Activated CD8-positive, alpha-beta T cell treated with anti-CD3 and anti-CD28 coated beads for 36 hours (primary cell): ENCODE measurements at regions of chr7 and their contacts with region 1.

Region 1: DNA sequence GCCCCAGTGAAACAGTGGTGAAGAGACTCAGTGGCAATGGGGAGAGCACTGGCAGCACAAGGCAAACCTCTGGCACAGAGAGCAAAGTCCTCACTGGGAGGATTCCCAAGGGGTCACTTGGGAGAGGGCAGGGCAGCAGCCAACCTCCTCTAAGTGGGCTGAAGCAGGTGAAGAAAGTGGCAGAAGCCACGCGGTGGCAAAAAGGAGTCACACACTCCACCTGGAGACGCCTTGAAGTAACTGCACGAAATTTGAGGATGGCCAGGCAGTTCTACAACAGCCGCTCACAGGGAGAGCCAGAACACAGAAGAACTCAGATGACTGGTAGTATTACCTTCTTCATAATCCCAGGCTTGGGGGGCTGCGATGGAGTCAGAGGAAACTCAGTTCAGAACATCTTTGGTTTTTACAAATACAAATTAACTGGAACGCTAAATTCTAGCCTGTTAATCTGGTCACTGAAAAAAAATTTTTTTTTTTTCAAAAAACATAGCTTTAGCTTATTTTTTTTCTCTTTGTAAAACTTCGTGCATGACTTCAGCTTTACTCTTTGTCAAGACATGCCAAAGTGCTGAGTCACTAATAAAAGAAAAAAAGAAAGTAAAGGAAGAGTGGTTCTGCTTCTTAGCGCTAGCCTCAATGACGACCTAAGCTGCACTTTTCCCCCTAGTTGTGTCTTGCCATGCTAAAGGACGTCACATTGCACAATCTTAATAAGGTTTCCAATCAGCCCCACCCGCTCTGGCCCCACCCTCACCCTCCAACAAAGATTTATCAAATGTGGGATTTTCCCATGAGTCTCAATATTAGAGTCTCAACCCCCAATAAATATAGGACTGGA is 435 bp upstream of the IL6 start:
- DNase-seq: peak; percentile 70
- ATAC-seq: peak; percentile 94
- H3K4me3 Mint-ChIP-seq: peak overlapping the region; percentile 25
- H3K27ac Mint-ChIP-seq: no peak overlapping the region
- H3K4me1 Mint-ChIP-seq: peaks cover 23% of the 10 kb centered on the region
- H3K27me3 Mint-ChIP-seq: peaks cover 46% of the 10 kb centered on the region
- CTCF ChIP-seq: peak; percentile 59

Region 2: DNA sequence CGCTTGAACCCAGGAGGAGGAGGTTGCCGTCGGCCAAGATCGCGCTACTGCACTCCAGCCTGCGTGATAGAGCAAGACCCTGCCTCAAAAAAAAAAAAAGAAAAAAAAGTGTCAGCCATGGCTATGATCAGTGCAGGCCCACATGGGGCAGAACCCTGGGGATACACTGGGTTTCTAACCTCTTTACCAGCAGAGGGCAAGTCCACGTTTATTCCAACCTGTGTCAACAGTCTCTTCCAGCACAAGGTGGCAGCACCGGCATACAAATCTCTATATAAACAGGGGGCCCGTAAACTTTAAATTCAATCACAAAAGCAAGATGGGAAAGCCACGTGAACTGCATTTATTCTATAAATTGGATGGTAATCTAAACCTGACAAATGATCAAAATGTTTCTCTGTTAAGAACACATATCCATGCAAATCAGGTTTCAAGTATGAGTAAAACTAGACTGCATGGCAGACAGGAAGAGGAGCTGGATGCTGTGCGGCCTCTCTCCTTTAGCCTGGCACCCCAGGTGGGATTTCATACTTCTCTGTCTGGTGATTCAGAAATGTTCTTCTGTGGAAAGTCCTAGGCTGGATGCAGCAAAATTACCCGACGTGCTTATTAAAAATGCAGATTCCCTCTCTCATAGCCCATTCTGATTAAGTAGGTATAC is 166.6 kb before region 1 on chr7:
- CTCF ChIA-PET with region 1: interaction called, 392 read pairs
- POLR2A ChIA-PET with region 1: interaction called, 3 read pairs
- intact Hi-C with region 1: loop called (anchors 1 kb)
- DNase-seq: peak; percentile 83
- ATAC-seq: peak; percentile 82
- H3K4me3 Mint-ChIP-seq: no peak overlapping the region
- H3K27ac Mint-ChIP-seq: no peak overlapping the region
- H3K4me1 Mint-ChIP-seq: peaks cover 25% of the 10 kb centered on the region
- H3K27me3 Mint-ChIP-seq: peaks cover 21% of the 10 kb centered on the region
- CTCF ChIP-seq: peak; percentile 90

Region 3: GRCh38 chr7:22577396-22578001 is 149.1 kb before region 1 on chr7:
- CTCF ChIA-PET with region 1: interaction called, 14 read pairs
- POLR2A ChIA-PET with region 1: no interaction called
- intact Hi-C with region 1: no loop called
- DNase-seq: no peak
- ATAC-seq: no peak
- H3K4me3 Mint-ChIP-seq: no peak overlapping the region
- H3K27ac Mint-ChIP-seq: no peak overlapping the region
- H3K4me1 Mint-ChIP-seq: no peaks in the 10 kb centered on the region
- H3K27me3 Mint-ChIP-seq: peaks cover 41% of the 10 kb centered on the region
- CTCF ChIP-seq: no peak

Region 4: DNA sequence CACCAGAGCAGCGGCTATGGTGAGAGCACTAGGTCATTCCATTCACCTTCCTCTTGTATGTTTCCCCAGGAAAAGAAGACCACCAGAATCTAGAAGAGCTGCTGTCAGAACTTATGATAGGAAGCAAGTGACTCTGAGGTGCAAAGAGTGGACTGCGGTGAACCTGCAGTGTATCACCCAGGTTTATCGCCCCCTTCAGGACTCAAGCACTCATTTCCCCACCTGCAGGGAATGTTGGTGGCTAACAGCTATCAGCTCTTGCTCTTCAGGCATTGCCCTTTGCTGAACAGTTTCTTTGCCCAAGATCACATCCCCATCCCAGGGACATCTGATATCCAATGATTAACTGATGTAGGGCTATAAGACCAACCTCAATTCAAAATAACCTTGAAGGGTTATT is 65.8 kb before region 1 on chr7:
- CTCF ChIA-PET with region 1: interaction called, 8 read pairs
- POLR2A ChIA-PET with region 1: no interaction called
- intact Hi-C with region 1: loop called (anchors 5 kb)
- DNase-seq: no peak
- ATAC-seq: no peak
- H3K4me3 Mint-ChIP-seq: no peak overlapping the region
- H3K27ac Mint-ChIP-seq: no peak overlapping the region
- H3K4me1 Mint-ChIP-seq: peaks cover 22% of the 10 kb centered on the region
- H3K27me3 Mint-ChIP-seq: peaks cover 17% of the 10 kb centered on the region
- CTCF ChIP-seq: peak; percentile 27

Region 5: DNA sequence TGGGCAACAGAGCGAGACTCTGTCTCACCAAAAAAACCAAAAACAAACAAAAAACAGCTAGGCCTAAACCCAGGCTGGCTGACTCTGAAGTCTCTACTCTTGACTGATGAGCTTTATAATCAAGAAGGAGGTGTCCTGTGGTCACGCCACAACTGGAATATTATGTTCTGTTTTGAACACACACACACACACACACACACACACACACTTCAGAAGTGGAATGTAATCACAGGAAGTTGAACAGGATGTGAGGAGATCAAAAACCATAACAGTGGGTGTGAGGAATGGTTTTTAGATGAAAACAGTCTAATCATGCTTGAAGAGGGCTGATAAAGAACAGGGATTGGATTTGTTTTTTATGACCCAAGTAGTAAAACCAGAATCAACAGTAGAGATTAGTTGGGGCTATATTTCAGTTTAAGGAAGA is 50.6 kb before region 1 on chr7:
- CTCF ChIA-PET with region 1: interaction called, 10 read pairs
- POLR2A ChIA-PET with region 1: no interaction called
- intact Hi-C with region 1: no loop called
- DNase-seq: peak; percentile 63
- ATAC-seq: peak; percentile 41
- H3K4me3 Mint-ChIP-seq: no peak overlapping the region
- H3K27ac Mint-ChIP-seq: peak overlapping the region; percentile 50
- H3K4me1 Mint-ChIP-seq: peaks cover 65% of the 10 kb centered on the region
- H3K27me3 Mint-ChIP-seq: peaks cover 8% of the 10 kb centered on the region
- CTCF ChIP-seq: no peak

Region 6: GRCh38 chr7:22712999-22713398 is 13.6 kb before region 1 on chr7:
- CTCF ChIA-PET with region 1: interaction called, 15 read pairs
- POLR2A ChIA-PET with region 1: interaction called, 4 read pairs
- intact Hi-C with region 1: no loop called
- DNase-seq: no peak
- ATAC-seq: no peak
- H3K4me3 Mint-ChIP-seq: no peak overlapping the region
- H3K27ac Mint-ChIP-seq: no peak overlapping the region
- H3K4me1 Mint-ChIP-seq: no peaks in the 10 kb centered on the region
- H3K27me3 Mint-ChIP-seq: peaks cover 19% of the 10 kb centered on the region
- CTCF ChIP-seq: no peak